Activated CD4-positive, alpha-beta T cell treated with anti-CD3 and anti-CD28 coated beads for 36 hours (primary cell): ENCODE measurements at regions of chr2 and their contacts with region 1.

Region 1: DNA sequence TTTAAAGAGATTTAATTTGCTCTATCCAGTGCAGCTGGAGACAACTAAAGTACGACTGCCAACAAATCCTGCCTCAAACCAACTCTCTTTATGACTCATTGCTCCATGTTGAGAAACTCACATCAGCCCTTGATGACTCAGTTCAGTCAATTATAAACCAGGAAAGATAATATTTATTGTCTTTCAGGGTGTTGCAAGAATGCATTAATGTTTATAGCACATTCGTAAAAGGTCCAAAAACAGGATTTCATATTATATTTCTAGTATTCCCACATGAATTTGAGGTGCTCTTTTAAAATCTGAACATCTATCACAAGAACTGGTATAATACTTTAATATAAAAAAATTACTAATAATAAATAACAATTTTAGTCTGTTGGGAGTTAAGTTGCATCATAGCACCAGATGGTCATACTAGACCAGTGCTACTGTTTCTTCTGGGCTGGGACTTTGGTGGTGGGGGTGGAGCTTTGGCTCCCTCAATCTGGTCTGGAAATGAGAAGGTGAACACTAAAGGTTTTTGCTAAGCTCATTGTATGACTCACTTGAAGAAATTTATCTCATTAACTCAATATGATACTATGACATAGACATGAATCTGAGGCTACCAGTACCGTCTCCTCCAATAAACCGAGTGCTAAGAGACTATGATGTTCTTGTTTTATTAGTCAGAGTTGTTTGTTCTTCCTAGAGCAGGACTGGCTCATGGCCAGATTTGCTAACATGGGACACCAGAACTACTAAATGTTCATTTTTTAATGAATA is 26.6 kb upstream of the MAP3K20 start:
- DNase-seq: peak; percentile 70
- ATAC-seq: peak; percentile 98
- H3K4me3 Mint-ChIP-seq: peak overlapping the region; percentile 22
- H3K27ac Mint-ChIP-seq: peak overlapping the region; percentile 59
- H3K4me1 Mint-ChIP-seq: peaks cover 17% of the 10 kb centered on the region
- H3K27me3 Mint-ChIP-seq: peaks cover 9% of the 10 kb centered on the region

Region 2: GRCh38 chr2:172972005-172972619 is 77.0 kb before region 1 on chr2:
- CTCF ChIA-PET with region 1: no interaction called
- POLR2A ChIA-PET with region 1: no interaction called
- intact Hi-C with region 1: loop called in 1 of 2 experiments (anchors 1 kb)
- DNase-seq: peak; percentile 71
- ATAC-seq: peak; percentile 73
- H3K4me3 Mint-ChIP-seq: no peak overlapping the region
- H3K27ac Mint-ChIP-seq: no peak overlapping the region
- H3K4me1 Mint-ChIP-seq: peaks cover 34% of the 10 kb centered on the region
- H3K27me3 Mint-ChIP-seq: no peaks in the 10 kb centered on the region

Region 3: GRCh38 chr2:173037245-173038120 is 11.6 kb before region 1 on chr2:
- CTCF ChIA-PET with region 1: no interaction called
- POLR2A ChIA-PET with region 1: no interaction called
- intact Hi-C with region 1: no loop called
- DNase-seq: no peak
- ATAC-seq: no peak
- H3K4me3 Mint-ChIP-seq: no peak overlapping the region
- H3K27ac Mint-ChIP-seq: no peak overlapping the region
- H3K4me1 Mint-ChIP-seq: no peaks in the 10 kb centered on the region
- H3K27me3 Mint-ChIP-seq: peaks cover 1% of the 10 kb centered on the region

Region 4: GRCh38 chr2:173075781-173076580 is 26.9 kb after region 1 on chr2 and contains the start of gene MAP3K20:
- CTCF ChIA-PET with region 1: no interaction called
- POLR2A ChIA-PET with region 1: no interaction called
- intact Hi-C with region 1: loop called (anchors 1 to 2 kb)
- DNase-seq: peak; percentile 73
- ATAC-seq: peak; percentile 85
- H3K4me3 Mint-ChIP-seq: peak within 1 kb of the TSS; percentile 76
- H3K27ac Mint-ChIP-seq: peak within 1 kb of the TSS; percentile 76
- H3K4me1 Mint-ChIP-seq: peaks cover 22% of the 10 kb centered on the region
- H3K27me3 Mint-ChIP-seq: peaks cover 33% of the 10 kb centered on the region
- total RNA-seq, gene MAP3K20: 8.1 to 8.4 TPM

Region 5: GRCh38 chr2:173134703-173135102 is 85.6 kb after region 1 on chr2:
- CTCF ChIA-PET with region 1: no interaction called
- POLR2A ChIA-PET with region 1: no interaction called
- intact Hi-C with region 1: loop called (anchors 1 to 2 kb)
- DNase-seq: peak; percentile 16
- ATAC-seq: no peak
- H3K4me3 Mint-ChIP-seq: no peak overlapping the region
- H3K27ac Mint-ChIP-seq: no peak overlapping the region
- H3K4me1 Mint-ChIP-seq: peaks cover 51% of the 10 kb centered on the region
- H3K27me3 Mint-ChIP-seq: peaks cover 38% of the 10 kb centered on the region

Region 6: DNA sequence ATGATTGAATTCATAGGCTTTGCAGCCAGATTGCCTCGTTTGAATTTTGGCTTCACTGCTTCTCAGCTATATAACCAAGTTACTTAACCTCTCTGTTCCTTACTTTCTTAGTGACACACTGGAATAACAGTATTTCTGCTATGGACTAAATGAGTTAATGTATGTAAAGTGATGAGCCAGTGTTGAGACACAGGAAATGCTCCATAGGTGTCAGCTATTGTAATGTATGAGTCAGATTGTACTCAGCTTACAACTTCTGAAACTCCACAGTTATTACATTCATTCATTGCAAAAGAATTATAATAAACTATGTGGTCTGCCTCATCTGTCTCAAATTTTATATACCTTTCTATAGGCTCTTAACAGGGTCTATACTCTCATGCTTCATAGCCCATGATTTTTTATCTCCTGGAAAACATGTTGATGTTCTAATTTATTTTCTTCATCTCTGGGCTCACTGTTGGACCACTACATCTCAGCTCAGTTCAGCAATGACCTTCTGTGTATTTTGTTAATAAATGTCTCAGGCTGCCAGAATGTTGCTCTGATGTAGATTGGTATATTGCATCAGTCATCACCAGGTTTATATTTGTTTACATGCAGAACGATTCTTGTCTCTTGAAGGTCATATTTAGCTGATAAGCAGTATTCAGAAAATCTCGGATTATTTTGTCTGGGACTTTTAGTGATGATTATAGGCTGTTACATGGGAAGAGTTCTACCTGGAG is 102.8 kb after region 1 on chr2:
- CTCF ChIA-PET with region 1: no interaction called
- POLR2A ChIA-PET with region 1: no interaction called
- intact Hi-C with region 1: loop called (anchors 1 kb)
- DNase-seq: no peak
- ATAC-seq: peak; percentile 90
- H3K4me3 Mint-ChIP-seq: no peak overlapping the region
- H3K27ac Mint-ChIP-seq: no peak overlapping the region
- H3K4me1 Mint-ChIP-seq: peaks cover 39% of the 10 kb centered on the region
- H3K27me3 Mint-ChIP-seq: peaks cover 21% of the 10 kb centered on the region

Region 7: GRCh38 chr2:173286153-173286809 is 237.2 kb after region 1 on chr2:
- CTCF ChIA-PET with region 1: interaction called, 3 read pairs
- POLR2A ChIA-PET with region 1: no interaction called
- intact Hi-C with region 1: loop called in 1 of 2 experiments (anchors 2 kb)
- DNase-seq: peak; percentile 20
- ATAC-seq: peak; percentile 86
- H3K4me3 Mint-ChIP-seq: no peak overlapping the region
- H3K27ac Mint-ChIP-seq: peak overlapping the region; percentile 60
- H3K4me1 Mint-ChIP-seq: peaks cover 16% of the 10 kb centered on the region
- H3K27me3 Mint-ChIP-seq: peaks cover 3% of the 10 kb centered on the region

Region 8: DNA sequence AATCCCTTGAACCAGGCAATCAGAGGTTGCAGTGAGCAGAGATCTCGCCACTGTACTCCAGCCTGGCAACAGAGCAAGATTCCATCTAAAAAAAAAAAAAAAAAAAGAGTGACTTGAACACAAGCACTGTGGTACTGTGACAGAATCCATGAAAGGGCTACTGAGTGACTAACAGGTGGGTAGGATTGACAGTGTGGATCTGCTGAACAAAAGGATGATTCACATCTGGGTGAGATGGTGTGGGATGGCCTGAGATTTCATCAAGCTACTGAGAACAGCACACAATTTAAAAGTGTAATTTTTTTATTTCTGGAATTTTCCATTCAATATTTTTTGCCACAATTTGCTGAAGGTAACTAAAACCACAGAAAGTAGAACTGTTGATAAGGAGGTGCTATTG is 929.4 kb after region 1 on chr2:
- CTCF ChIA-PET with region 1: no interaction called
- POLR2A ChIA-PET with region 1: no interaction called
- intact Hi-C with region 1: loop called in 1 of 2 experiments (anchors 10 kb)
- DNase-seq: peak; percentile 59
- ATAC-seq: peak; percentile 99
- H3K4me3 Mint-ChIP-seq: no peak overlapping the region
- H3K27ac Mint-ChIP-seq: peak overlapping the region; percentile 42
- H3K4me1 Mint-ChIP-seq: peaks cover 30% of the 10 kb centered on the region
- H3K27me3 Mint-ChIP-seq: peaks cover 4% of the 10 kb centered on the region